Right lobe of liver (tissue), 6 donors: ENCODE measurements at regions of chr2 and their contacts with region 1.

Region 1: DNA sequence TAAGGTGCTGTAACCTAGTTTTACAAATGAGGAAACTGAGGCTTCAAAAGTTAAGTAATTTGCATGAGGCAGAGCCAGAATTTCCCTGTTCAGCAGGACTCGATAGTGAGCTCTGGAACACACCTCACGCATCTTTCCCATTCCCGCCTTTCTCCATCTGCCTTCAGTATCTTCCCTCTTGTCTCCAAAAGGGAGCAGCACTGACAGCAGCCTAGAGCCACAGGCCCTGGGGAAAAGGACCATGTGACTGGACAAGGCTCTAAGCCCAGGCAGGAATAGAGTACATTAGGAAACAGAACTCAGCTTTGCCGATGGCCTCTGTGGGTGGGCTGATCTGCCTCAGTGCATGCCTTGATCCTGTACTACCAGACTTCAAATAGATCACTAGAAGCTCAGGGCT is 21.5 kb downstream of the GPR155 start:
- DNase-seq: no peak
- ATAC-seq: peak; percentile 32 to 46 (median 38)
- H3K4me3 ChIP-seq: no peak overlapping the region
- H3K27ac ChIP-seq: no peak overlapping the region
- H3K4me1 ChIP-seq: no peaks in the 10 kb centered on the region
- H3K27me3 ChIP-seq: no peaks in the 10 kb centered on the region
- CTCF ChIP-seq: peak in 1 of 4 donors; percentile 10
- POLR2A ChIP-seq: no peak

Region 2: GRCh38 chr2:174522553-174522952 is 57.2 kb after region 1 on chr2:
- intact Hi-C with region 1: loop called (anchors 10 kb)
- DNase-seq: no peak
- ATAC-seq: peak; percentile 59 to 64 (median 60)
- H3K4me3 ChIP-seq: no peak overlapping the region
- H3K27ac ChIP-seq: no peak overlapping the region
- H3K4me1 ChIP-seq: peaks cover 0 to 12% (median 0%) of the 10 kb centered on the region in 4 donors
- H3K27me3 ChIP-seq: no peaks in the 10 kb centered on the region
- CTCF ChIP-seq: peak; percentile 47 to 56 (median 56)
- POLR2A ChIP-seq: no peak

Region 3: GRCh38 chr2:174603280-174603679 is 138.0 kb after region 1 on chr2:
- intact Hi-C with region 1: loop called in 1 of 2 experiments (anchors 10 kb)
- DNase-seq: peak in 2 of 3 donors; percentile 33 to 70
- ATAC-seq: peak; percentile 94 to 96 (median 95)
- H3K4me3 ChIP-seq: no peak overlapping the region
- H3K27ac ChIP-seq: no peak overlapping the region
- H3K4me1 ChIP-seq: no peaks in the 10 kb centered on the region
- H3K27me3 ChIP-seq: no peaks in the 10 kb centered on the region
- CTCF ChIP-seq: peak; percentile 57 to 75 (median 66)
- POLR2A ChIP-seq: no peak

Region 4: DNA sequence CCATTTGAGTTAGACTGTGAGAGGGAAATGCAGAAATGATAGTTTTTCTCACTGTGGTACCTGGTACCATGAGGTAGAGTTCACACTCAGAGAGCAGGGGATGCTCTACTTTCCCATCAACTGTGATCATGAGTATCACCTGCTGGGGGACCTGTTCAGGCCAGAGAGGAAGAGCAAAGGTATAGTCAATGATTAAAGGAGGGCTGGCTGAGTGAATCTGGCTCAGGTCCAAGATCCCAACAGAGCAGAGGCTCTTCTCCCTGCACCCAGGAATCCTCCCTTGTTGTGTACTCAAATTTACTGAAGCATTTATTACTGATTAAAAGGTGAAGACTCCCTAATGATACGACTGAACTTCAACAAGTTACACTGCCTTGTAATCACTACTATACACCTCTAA is 403.6 kb after region 1 on chr2:
- intact Hi-C with region 1: no loop called
- DNase-seq: no peak
- ATAC-seq: no peak
- H3K4me3 ChIP-seq: no peak overlapping the region
- H3K27ac ChIP-seq: no peak overlapping the region
- H3K4me1 ChIP-seq: no peaks in the 10 kb centered on the region
- H3K27me3 ChIP-seq: no peaks in the 10 kb centered on the region
- CTCF ChIP-seq: no peak
- POLR2A ChIP-seq: no peak